ENCODE measurements at regions of chr12 and their contacts with region 1.

Region 1: DNA sequence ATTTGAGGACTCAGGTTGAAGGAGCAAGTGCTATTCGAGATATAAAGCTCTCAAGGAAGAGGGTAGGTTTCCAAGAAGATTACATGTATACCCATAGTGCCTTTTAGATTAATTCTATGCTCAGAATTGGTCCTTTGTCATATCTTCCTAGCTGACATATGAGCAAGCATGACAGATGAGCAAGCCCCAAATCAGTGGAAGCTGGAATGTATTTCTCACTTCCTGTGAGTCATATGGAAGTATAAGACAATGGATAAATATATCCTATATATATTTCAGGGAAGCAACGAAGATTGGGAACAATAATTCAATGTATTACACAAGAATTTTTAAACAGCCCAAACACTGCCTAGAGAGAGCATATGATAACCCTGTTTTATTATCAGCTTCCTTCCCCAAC is 674.1 kb upstream of the ATXN7L3B start:
- DNase-seq: no peak
- H3K4me3 ChIP-seq: no peak overlapping the region
- H3K27ac ChIP-seq: no peak overlapping the region
- H3K4me1 ChIP-seq: no peaks in the 10 kb centered on the region
- H3K27me3 ChIP-seq: no peaks in the 10 kb centered on the region
- CTCF ChIP-seq: no peak
- POLR2A ChIP-seq: no peak

Region 2: DNA sequence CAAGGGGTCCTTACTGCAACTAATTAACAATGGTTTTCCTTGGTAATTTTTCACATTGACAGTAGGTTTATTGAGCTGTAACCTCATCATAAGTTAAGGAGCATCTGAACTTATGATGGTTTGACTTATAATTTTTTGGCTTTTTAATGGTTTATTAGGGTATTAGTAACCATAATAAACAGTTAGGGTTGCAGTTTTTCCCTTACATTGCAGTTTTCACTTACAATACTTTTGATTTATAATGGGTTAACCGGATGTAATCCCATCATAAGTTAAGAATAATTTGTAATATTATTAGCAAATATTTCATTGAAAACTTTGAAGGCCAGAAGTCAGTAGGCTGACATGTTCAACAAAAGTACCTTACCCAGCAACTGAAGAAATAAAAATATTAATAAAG is 779.8 kb before region 1 on chr12:
- intact Hi-C with region 1: loop called (anchors 5 kb)
- DNase-seq: no peak
- H3K4me3 ChIP-seq: no peak overlapping the region
- H3K27ac ChIP-seq: no peak overlapping the region
- H3K4me1 ChIP-seq: no peaks in the 10 kb centered on the region
- H3K27me3 ChIP-seq: no peaks in the 10 kb centered on the region
- CTCF ChIP-seq: no peak
- POLR2A ChIP-seq: no peak

Region 3: DNA sequence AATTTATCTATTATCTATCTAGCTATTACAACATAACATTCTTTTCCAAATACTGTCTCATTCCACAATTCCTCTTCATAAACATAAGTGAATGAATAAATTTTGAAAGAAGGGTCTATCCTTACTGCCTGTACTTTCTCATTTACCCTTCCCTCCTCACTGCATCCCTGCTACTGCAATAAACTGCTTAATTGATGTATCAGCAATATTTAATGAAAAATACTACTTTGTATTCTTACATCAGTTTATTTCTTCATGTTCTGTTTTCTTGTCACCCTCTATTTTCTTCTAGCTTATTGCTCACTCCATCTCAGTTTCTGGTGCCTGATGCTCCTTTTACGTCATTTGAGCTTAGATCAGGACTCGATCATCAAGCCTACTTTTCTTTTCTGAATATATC is 21.6 kb before region 1 on chr12:
- intact Hi-C with region 1: no loop called
- DNase-seq: no peak
- H3K4me3 ChIP-seq: no peak overlapping the region
- H3K27ac ChIP-seq: no peak overlapping the region
- H3K4me1 ChIP-seq: no peaks in the 10 kb centered on the region
- H3K27me3 ChIP-seq: no peaks in the 10 kb centered on the region
- CTCF ChIP-seq: no peak
- POLR2A ChIP-seq: no peak